ENCODE measurements at regions of chr12 and their contacts with region 1.

Region 1: GRCh38 chr12:31659087-31659933 is at the start of gene ETFBKMT:
- DNase-seq: peak; percentile 84 to 91
- ATAC-seq: peak; percentile 94 to 96 (median 94)
- H3K4me3 ChIP-seq: peak within 1 kb of the TSS; percentile 68
- H3K27ac ChIP-seq: peak within 1 kb of the TSS; percentile 94
- H3K4me1 ChIP-seq: peaks cover 4% of the 10 kb centered on the region
- H3K27me3 ChIP-seq: no peaks in the 10 kb centered on the region
- CTCF ChIP-seq: peak; percentile 35
- total RNA-seq, gene ETFBKMT: 5.0 to 7.3 (median 5.6) TPM

Region 2: DNA sequence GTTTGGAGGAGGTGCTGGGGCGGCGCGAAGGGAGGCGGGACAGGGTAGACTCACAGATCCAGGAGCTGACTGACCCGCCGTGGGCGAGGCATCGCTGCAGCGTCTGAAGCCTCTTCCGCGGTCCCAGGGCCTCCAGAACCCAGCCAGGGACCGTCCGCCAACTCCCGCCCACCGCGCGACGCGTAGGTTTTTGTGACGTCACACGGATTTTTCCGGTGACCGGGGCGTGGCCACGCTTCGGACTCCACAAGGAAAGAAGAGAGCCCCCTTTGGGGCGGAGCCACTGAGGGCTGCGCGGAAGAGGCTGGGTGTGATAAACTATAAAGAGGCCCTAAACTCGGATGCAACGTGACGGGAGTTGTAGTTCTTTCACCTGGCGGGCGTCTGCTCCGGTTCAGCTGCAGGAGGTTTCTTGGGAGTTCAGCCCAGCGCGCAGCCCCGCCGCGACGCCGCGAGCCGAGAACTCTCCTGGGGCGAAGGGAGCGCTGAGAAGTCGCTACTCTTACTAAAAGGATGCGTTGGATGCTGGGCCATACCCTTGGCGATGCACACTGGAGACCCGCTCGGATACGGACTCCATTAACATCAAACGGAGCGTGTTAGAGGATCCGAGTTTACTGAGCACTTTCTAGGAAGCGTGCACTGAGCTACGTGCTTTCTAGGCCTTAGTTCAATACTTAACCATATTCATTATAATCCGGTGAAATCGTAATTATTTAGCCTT is 69.8 kb after region 1 on chr12 and contains the start of gene AMN1:
- intact Hi-C with region 1: loop called (anchors 5 kb)
- DNase-seq: peak; percentile 99
- ATAC-seq: peak; percentile 93 to 96 (median 94)
- H3K4me3 ChIP-seq: peak within 1 kb of the TSS; percentile 87
- H3K27ac ChIP-seq: peak within 1 kb of the TSS; percentile 94
- H3K4me1 ChIP-seq: peaks cover 44% of the 10 kb centered on the region
- H3K27me3 ChIP-seq: no peaks in the 10 kb centered on the region
- CTCF ChIP-seq: peak; percentile 10
- total RNA-seq, gene AMN1: 10.4 to 19.8 (median 12.8) TPM

Region 3: DNA sequence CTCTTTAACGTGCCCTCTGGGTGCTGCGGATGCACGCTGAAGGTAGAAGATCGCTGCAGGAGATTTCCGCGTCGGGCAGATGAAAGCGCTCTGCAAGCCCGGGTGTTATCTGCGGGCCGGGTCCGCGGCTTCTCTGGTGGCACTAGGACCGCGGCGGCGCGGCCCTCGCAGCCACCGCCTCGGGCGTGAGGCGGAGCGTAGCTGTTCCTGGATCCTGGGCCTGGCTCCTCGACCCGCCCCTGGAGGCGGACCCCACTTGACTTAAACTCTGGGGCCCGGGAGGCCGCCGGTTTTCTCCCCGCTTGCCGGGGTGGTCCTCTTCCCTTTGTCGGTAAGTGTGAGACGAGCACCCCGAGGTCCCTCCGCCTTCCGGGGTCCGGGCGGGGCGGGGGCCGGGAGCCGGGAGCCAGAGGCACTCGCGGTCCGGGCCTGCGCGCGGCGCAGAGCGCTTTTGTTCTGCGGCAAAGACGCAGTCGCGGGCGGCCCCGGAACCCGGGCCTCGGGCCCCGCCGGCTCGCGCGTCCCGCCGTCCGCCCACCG is 299.9 kb after region 1 on chr12 and contains the start of gene RESF1:
- intact Hi-C with region 1: loop called (anchors 5 to 10 kb)
- DNase-seq: peak; percentile 88 to 91
- ATAC-seq: peak; percentile 97 to 98 (median 98)
- H3K4me3 ChIP-seq: peak within 1 kb of the TSS; percentile 74
- H3K27ac ChIP-seq: peak within 1 kb of the TSS; percentile 87
- H3K4me1 ChIP-seq: peaks cover 24% of the 10 kb centered on the region
- H3K27me3 ChIP-seq: no peaks in the 10 kb centered on the region
- CTCF ChIP-seq: no peak
- total RNA-seq, gene RESF1: 11.9 to 18.4 (median 14.2) TPM

Measured in psoas muscle (tissue), 8 donors.